ENCODE measurements at regions of chr6 and their contacts with region 1.

Region 1: DNA sequence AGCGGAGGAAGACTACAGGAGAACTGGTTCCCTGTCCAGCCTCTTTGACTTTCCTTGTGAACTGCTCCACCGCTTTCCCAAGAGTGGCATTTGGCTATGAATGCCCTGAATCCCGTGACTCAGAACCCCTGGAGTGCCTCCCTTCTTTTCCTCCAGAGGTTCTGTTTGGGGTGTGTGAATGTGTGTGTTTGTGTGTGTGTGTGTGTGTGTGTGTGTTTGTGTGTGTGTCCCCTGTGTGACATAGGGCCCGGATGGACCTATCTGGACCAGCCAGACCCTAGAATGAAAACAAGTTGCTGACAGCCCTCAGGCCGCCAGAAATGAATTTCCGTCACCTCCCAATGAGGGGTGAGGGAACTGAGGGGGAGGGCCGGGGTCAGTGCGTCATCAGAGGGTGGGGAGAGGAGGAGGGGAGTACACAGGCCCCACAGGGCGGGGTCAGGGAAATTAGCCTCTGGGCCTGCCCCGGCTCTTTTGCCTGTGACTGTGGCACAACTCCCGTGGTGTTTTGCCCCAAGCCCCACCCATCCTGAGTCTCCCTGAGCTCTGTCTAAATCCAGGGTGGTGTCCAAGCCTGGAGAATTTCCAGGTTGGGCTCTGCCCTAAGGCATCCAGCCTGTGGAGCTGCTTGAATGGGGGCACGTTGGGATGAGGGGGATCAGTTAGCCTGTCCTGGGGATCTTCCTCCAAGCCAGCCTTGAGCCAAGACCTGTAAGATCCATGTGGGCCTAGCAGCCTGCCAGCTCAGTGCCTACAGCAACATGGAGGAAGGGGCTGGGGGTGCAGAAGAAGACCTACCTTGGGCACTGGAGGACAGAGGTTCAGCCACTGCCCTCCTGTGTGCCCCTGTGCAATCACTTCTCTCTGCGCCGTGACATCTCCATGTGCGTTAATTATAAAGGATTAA is 15.2 kb upstream of the MRPS18A start:
- H3K4me3 ChIP-seq: no peak overlapping the region
- H3K27ac ChIP-seq: peak overlapping the region; percentile 50
- H3K4me1 ChIP-seq: peaks cover 38% of the 10 kb centered on the region
- CTCF ChIP-seq: no peak

Region 2: GRCh38 chr6:43687437-43688347 is 15.1 kb before region 1 on chr6 and contains the start of gene MRPS18A:
- CTCF ChIA-PET with region 1: interaction called, 3 read pairs
- POLR2A ChIA-PET with region 1: interaction called, 12 read pairs
- H3K4me3 ChIP-seq: peak within 1 kb of the TSS; percentile 91
- H3K27ac ChIP-seq: peak within 1 kb of the TSS; percentile 56
- H3K4me1 ChIP-seq: peaks cover 24% of the 10 kb centered on the region
- CTCF ChIP-seq: no peak

Measured in HEK293 (cell line).